B cell (primary cell): ENCODE measurements at regions of chr17 and their contacts with region 1.

Region 1: DNA sequence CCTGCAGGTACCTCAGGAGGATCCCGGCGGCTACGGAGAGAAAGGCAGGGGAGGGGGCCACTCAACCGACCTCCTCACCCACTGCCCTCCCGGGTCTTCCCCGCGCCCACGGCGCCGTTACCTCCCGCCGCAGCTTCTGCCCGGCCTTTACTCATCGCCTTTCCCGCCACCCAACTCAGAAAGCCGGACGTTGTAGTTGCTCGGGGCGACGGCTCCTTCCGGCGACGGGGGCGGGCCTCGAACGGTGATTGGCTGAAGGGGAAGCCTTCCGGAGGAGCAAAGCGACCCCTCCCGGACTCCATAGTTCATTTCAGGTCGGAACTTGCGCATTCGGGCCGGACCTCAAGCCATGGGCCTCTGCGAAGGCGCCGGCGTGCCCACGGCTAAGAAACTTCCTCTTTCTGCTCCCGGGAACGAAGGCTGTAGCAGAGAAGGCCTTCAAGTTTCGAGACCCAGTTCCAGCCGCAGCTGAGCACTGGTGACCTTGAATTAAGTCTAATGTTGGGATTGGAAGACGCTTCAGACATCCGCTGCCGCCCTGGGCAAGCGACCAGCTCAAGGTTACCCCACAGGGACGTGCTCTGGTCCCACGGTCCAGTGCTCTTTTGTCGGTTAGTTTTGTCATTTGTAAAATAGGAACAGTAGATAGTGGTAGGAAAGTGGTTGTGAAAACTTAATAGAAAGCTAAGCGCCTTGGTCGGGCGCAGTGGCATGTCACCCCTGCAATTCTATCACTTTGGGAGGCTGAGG is at the start of gene PSMC3IP:
- DNase-seq: peak; percentile 94
- ATAC-seq: peak; percentile 93
- H3K4me3 ChIP-seq: peak within 1 kb of the TSS; percentile 56 to 82 (median 74)
- H3K4me3 Mint-ChIP-seq: peak within 1 kb of the TSS; percentile 99
- H3K27ac ChIP-seq: peak within 1 kb of the TSS; percentile 45 to 72
- H3K27ac Mint-ChIP-seq: peak within 1 kb of the TSS; percentile 99
- H3K4me1 ChIP-seq: peaks cover 12 to 30% of the 10 kb centered on the region in 2 donors
- H3K4me1 Mint-ChIP-seq: peaks cover 42% of the 10 kb centered on the region
- H3K27me3 ChIP-seq: no peaks in the 10 kb centered on the region
- H3K27me3 Mint-ChIP-seq: no peaks in the 10 kb centered on the region
- CTCF ChIP-seq: no peak
- total RNA-seq, gene PSMC3IP: 7.9 and 10.4 TPM in 2 replicates

Region 2: DNA sequence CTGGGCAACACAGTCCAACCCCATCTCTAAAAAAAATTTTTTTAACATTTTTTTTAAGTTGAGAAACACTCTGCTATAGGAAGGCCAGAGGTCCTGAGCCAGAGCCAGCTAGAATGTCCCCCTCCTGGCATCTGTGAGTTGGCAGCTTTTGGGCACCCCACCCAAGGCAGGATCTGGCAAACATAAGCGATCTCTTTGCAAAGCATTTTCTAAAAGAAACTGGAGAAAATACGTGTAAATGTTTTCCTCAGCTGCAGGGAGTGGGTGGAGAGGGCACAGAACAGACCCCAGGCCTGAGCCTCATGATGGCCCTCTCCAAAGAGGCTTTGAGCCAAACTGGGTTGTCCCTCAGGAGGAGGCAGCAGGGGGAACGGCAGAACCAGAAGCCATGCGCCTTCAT is 166.3 kb before region 1 on chr17:
- CTCF ChIA-PET with region 1: no interaction called
- POLR2A ChIA-PET with region 1: no interaction called
- intact Hi-C with region 1: no loop called
- DNase-seq: no peak
- ATAC-seq: no peak
- H3K4me3 ChIP-seq: no peak overlapping the region
- H3K4me3 Mint-ChIP-seq: no peak overlapping the region
- H3K27ac ChIP-seq: no peak overlapping the region
- H3K27ac Mint-ChIP-seq: no peak overlapping the region
- H3K4me1 ChIP-seq: peaks cover 18 to 38% of the 10 kb centered on the region in 2 donors
- H3K4me1 Mint-ChIP-seq: peaks cover 27% of the 10 kb centered on the region
- H3K27me3 ChIP-seq: peaks cover 0 to 5% (median 0%) of the 10 kb centered on the region in 4 experiments
- H3K27me3 Mint-ChIP-seq: peaks cover 5% of the 10 kb centered on the region
- CTCF ChIP-seq: no peak

Region 3: GRCh38 chr17:42527273-42527703 is 50.4 kb before region 1 on chr17:
- CTCF ChIA-PET with region 1: interaction called, 11 read pairs
- POLR2A ChIA-PET with region 1: no interaction called
- intact Hi-C with region 1: no loop called
- DNase-seq: peak; percentile 79
- ATAC-seq: peak; percentile 68
- H3K4me3 ChIP-seq: no peak overlapping the region
- H3K4me3 Mint-ChIP-seq: no peak overlapping the region
- H3K27ac ChIP-seq: no peak overlapping the region
- H3K27ac Mint-ChIP-seq: peak overlapping the region; percentile 28
- H3K4me1 ChIP-seq: peaks cover 24 to 37% of the 10 kb centered on the region in 2 donors
- H3K4me1 Mint-ChIP-seq: peaks cover 26% of the 10 kb centered on the region
- H3K27me3 ChIP-seq: no peaks in the 10 kb centered on the region
- H3K27me3 Mint-ChIP-seq: no peaks in the 10 kb centered on the region
- CTCF ChIP-seq: peak; percentile 80

Region 4: DNA sequence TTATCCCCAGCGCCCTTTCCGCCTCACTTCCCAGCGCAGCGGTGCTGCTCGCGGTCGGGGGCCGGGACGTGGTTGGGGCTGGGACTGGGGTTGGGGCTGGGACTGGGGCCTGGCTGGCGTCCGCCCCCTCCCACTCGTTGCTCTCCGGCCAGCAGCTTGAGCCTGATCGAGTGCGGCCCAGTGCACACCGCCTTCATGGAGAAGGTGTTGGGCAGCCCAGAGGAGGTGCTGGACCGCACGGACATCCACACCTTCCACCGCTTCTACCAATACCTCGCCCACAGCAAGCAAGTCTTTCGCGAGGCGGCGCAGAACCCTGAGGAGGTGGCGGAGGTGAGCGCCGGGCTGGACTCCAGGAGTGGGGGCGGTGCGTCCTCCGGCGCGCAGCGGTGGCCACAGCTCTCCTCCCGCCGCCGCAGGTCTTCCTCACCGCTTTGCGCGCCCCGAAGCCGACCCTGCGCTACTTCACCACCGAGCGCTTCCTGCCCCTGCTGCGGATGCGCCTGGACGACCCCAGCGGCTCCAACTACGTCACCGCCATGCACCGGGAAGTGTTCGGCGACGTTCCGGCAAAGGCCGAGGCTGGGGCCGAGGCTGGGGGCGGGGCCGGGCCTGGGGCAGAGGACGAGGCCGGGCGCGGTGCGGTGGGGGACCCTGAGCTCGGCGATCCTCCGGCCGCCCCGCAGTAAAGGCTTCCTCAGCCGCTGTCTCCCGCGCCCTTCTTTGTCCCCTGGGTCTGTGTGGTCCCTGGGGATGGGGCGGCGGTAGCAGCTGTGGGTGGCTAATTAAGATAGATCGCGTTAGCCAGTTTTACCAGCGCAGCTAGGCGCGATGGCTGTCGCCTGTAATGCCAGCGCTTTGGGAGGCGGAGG is 23.2 kb before region 1 on chr17:
- CTCF ChIA-PET with region 1: interaction called, 39 read pairs
- POLR2A ChIA-PET with region 1: interaction called, 10 read pairs
- intact Hi-C with region 1: loop called (anchors 1 kb)
- DNase-seq: peak; percentile 94
- ATAC-seq: peak; percentile 91
- H3K4me3 ChIP-seq: peak overlapping the region; percentile 61 to 99 (median 90)
- H3K4me3 Mint-ChIP-seq: peak overlapping the region; percentile 96
- H3K27ac ChIP-seq: peak overlapping the region; percentile 88 to 96
- H3K27ac Mint-ChIP-seq: peak overlapping the region; percentile 98
- H3K4me1 ChIP-seq: peaks cover 15 to 27% of the 10 kb centered on the region in 2 donors
- H3K4me1 Mint-ChIP-seq: peaks cover 20% of the 10 kb centered on the region
- H3K27me3 ChIP-seq: no peaks in the 10 kb centered on the region
- H3K27me3 Mint-ChIP-seq: no peaks in the 10 kb centered on the region
- CTCF ChIP-seq: no peak

Region 5: DNA sequence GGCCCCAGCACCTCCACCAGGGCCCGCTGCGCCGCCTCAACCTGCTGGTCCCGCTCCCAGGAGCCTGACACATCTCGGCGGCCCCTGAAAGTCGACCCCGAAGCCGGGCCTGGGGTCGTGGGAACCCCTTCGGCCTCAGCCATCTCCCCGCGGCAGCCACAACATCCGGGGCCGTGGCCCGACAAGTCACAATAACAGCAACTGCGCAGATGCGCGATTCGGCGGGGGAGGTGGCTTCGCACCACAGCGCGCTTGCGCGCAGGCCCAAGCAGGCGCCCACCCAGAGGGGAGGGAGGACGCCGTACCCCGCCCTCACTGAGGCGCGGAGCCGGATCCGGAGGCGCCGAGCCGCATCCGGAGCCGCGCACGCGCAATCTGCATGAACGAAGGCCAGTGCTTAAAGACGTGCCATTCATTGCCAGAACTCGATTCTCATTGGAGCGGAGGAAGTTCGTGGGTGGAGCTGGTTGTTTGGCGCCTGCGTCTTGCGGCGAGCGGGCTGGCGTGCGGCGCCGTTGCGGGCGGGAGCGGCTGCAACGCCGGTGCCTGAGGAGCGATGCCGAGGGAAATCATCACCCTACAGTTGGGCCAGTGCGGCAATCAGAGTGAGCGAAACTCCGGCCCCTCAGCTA is 31.6 kb after region 1 on chr17 and contains the starts of genes RETREG3 and TUBG1:
- CTCF ChIA-PET with region 1: interaction called, 35 read pairs
- POLR2A ChIA-PET with region 1: interaction called, 19 read pairs
- intact Hi-C with region 1: loop called (anchors 1 kb)
- DNase-seq: peak; percentile 100
- ATAC-seq: peak; percentile 91
- H3K4me3 ChIP-seq: peak within 1 kb of the TSS; percentile 73 to 95 (median 85)
- H3K4me3 Mint-ChIP-seq: peak within 1 kb of the TSS; percentile 100
- H3K27ac ChIP-seq: peak within 1 kb of the TSS; percentile 79 to 95
- H3K27ac Mint-ChIP-seq: peak within 1 kb of the TSS; percentile 98
- H3K4me1 ChIP-seq: peaks cover 38 to 42% of the 10 kb centered on the region in 2 donors
- H3K4me1 Mint-ChIP-seq: peaks cover 51% of the 10 kb centered on the region
- H3K27me3 ChIP-seq: no peaks in the 10 kb centered on the region
- H3K27me3 Mint-ChIP-seq: no peaks in the 10 kb centered on the region
- CTCF ChIP-seq: peak; percentile 37
- total RNA-seq, gene RETREG3: 103 and 108 TPM in 2 replicates
- total RNA-seq, gene TUBG1: 15.7 and 17.2 TPM in 2 replicates

Region 6: DNA sequence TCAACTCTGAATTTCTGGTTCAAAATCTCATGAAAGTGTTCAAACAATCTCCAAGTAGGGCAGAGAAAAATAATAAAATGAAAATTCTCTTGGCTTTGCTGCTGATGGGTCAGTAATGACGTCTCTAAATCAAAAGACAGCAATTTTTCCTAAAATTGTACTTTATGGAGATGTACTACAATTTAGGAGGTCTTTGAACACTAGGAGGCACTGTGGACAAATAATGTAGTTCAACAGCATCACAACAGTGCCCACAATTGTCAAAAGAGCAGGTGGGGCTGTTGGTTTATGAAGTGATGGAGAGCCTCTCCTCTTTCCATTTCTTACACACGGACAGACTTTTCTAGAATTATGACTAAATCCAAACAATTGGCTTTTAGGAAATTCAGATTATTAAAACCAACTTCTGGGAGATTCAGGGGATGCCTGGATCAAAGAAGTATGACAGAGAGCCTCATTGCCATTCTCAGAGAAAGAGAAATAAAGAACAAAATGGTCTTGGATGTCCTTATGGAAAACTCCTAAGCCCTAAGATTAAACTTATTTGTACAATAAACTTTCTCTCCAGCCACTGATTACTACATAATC is 143.4 kb after region 1 on chr17:
- CTCF ChIA-PET with region 1: interaction called, 18 read pairs
- POLR2A ChIA-PET with region 1: no interaction called
- intact Hi-C with region 1: no loop called
- DNase-seq: peak; percentile 78
- ATAC-seq: peak; percentile 82
- H3K4me3 ChIP-seq: no peak overlapping the region
- H3K4me3 Mint-ChIP-seq: no peak overlapping the region
- H3K27ac ChIP-seq: no peak overlapping the region
- H3K27ac Mint-ChIP-seq: peak overlapping the region; percentile 21
- H3K4me1 ChIP-seq: no peaks in the 10 kb centered on the region
- H3K4me1 Mint-ChIP-seq: peaks cover 3% of the 10 kb centered on the region
- H3K27me3 ChIP-seq: no peaks in the 10 kb centered on the region
- H3K27me3 Mint-ChIP-seq: no peaks in the 10 kb centered on the region
- CTCF ChIP-seq: peak; percentile 80

Region 7: DNA sequence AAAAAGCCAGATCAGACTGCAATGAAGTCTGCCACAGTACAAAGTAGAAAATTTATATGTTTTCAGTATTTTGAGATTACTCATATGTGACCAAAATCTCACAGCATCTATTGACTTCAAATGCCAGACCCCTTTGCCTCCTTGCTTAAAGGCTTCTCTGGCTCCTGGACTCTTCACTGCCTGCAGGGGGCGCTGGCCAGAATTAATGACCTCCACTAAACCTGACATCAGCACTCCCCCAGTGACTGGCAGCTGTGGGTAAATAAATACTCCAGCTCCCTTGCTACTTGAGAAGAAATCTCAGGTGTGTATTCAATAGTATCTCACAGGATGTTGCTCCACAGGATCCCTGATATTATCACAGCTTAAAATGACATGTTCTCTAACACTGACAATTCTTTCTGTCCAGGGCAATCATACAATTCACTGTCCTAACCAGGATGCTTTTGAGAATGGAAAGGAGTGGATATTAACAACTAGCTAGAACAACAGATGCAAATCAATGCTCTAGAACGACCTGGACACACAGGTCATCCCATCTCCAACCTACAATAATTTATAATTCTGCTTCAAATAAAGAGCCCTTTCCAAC is 242.3 kb after region 1 on chr17:
- CTCF ChIA-PET with region 1: interaction called, 13 read pairs
- POLR2A ChIA-PET with region 1: interaction called, 8 read pairs
- intact Hi-C with region 1: loop called (anchors 1 kb)
- DNase-seq: peak; percentile 71
- ATAC-seq: no peak
- H3K4me3 ChIP-seq: no peak overlapping the region
- H3K4me3 Mint-ChIP-seq: no peak overlapping the region
- H3K27ac ChIP-seq: no peak overlapping the region
- H3K27ac Mint-ChIP-seq: no peak overlapping the region
- H3K4me1 ChIP-seq: peaks cover 6 to 18% of the 10 kb centered on the region in 2 donors
- H3K4me1 Mint-ChIP-seq: peaks cover 23% of the 10 kb centered on the region
- H3K27me3 ChIP-seq: no peaks in the 10 kb centered on the region
- H3K27me3 Mint-ChIP-seq: no peaks in the 10 kb centered on the region
- CTCF ChIP-seq: peak; percentile 86